ENCODE measurements at regions of chr6 and their contacts with region 1.

Region 1: GRCh38 chr6:7910654-7911344 is at the start of gene TXNDC5:
- DNase-seq: peak; percentile 83
- ATAC-seq: peak; percentile 87
- H3K4me3 Mint-ChIP-seq: peak within 1 kb of the TSS; percentile 91
- H3K27ac Mint-ChIP-seq: peak within 1 kb of the TSS; percentile 76
- H3K4me1 Mint-ChIP-seq: peaks cover 15% of the 10 kb centered on the region
- H3K27me3 Mint-ChIP-seq: no peaks in the 10 kb centered on the region
- total RNA-seq, gene TXNDC5: 44.4 to 52.8 TPM

Region 2: GRCh38 chr6:7787137-7787608 is 123.6 kb before region 1 on chr6:
- CTCF ChIA-PET with region 1: no interaction called
- POLR2A ChIA-PET with region 1: no interaction called
- intact Hi-C with region 1: no loop called
- DNase-seq: no peak
- ATAC-seq: no peak
- H3K4me3 Mint-ChIP-seq: no peak overlapping the region
- H3K27ac Mint-ChIP-seq: no peak overlapping the region
- H3K4me1 Mint-ChIP-seq: no peaks in the 10 kb centered on the region
- H3K27me3 Mint-ChIP-seq: peaks cover 31% of the 10 kb centered on the region

Region 3: GRCh38 chr6:7974938-7975763 is 64.4 kb after region 1 on chr6:
- CTCF ChIA-PET with region 1: no interaction called
- POLR2A ChIA-PET with region 1: no interaction called
- intact Hi-C with region 1: no loop called
- DNase-seq: no peak
- ATAC-seq: no peak
- H3K4me3 Mint-ChIP-seq: no peak overlapping the region
- H3K27ac Mint-ChIP-seq: no peak overlapping the region
- H3K4me1 Mint-ChIP-seq: peaks cover 4% of the 10 kb centered on the region
- H3K27me3 Mint-ChIP-seq: peaks cover 13% of the 10 kb centered on the region

Region 4: GRCh38 chr6:8006208-8006607 is 95.4 kb after region 1 on chr6:
- CTCF ChIA-PET with region 1: interaction called, 4 read pairs
- POLR2A ChIA-PET with region 1: no interaction called
- intact Hi-C with region 1: loop called (anchors 5 kb)
- DNase-seq: peak; percentile 14
- ATAC-seq: no peak
- H3K4me3 Mint-ChIP-seq: no peak overlapping the region
- H3K27ac Mint-ChIP-seq: no peak overlapping the region
- H3K4me1 Mint-ChIP-seq: peaks cover 6% of the 10 kb centered on the region
- H3K27me3 Mint-ChIP-seq: peaks cover 2% of the 10 kb centered on the region

Region 5: GRCh38 chr6:8243475-8243874 is 332.7 kb after region 1 on chr6:
- CTCF ChIA-PET with region 1: no interaction called
- POLR2A ChIA-PET with region 1: no interaction called
- intact Hi-C with region 1: no loop called
- DNase-seq: no peak
- ATAC-seq: no peak
- H3K4me3 Mint-ChIP-seq: no peak overlapping the region
- H3K27ac Mint-ChIP-seq: no peak overlapping the region
- H3K4me1 Mint-ChIP-seq: no peaks in the 10 kb centered on the region
- H3K27me3 Mint-ChIP-seq: peaks cover 7% of the 10 kb centered on the region

Region 6: GRCh38 chr6:8435160-8435852 is 524.5 kb after region 1 on chr6 and contains the start of gene SLC35B3:
- CTCF ChIA-PET with region 1: no interaction called
- POLR2A ChIA-PET with region 1: no interaction called
- intact Hi-C with region 1: loop called in 1 of 2 experiments (anchors 2 kb)
- DNase-seq: peak; percentile 99
- ATAC-seq: peak; percentile 95
- H3K4me3 Mint-ChIP-seq: peak within 1 kb of the TSS; percentile 92
- H3K27ac Mint-ChIP-seq: peak within 1 kb of the TSS; percentile 95
- H3K4me1 Mint-ChIP-seq: peaks cover 38% of the 10 kb centered on the region
- H3K27me3 Mint-ChIP-seq: no peaks in the 10 kb centered on the region
- total RNA-seq, gene SLC35B3: 4.9 to 6.7 TPM